GM12878 (cell line): ENCODE measurements at regions of chr10 and their contacts with region 1.

Region 1: GRCh38 chr10:88091490-88092105 is 228.2 kb downstream of the PTEN start:
- DNase-seq: peak; percentile 98
- ATAC-seq: peak; percentile 88
- H3K4me3 ChIP-seq: 0 out of 2 replicates have a peak overlapping the region, but pooled peaks have one; percentile 20
- H3K27ac ChIP-seq: peak overlapping the region; percentile 97
- H3K4me1 ChIP-seq: peaks cover 31% of the 10 kb centered on the region
- H3K27me3 ChIP-seq: no peaks in the 10 kb centered on the region
- CTCF ChIP-seq: peak in 1 of 3 experiments; percentile 23; a peak in 1 of 6 replicates
- EP300 ChIP-seq: peak; percentile 92 to 94
- POLR2A ChIP-seq: no peak
- RAD21 ChIP-seq: peak; percentile 51

Region 2: GRCh38 chr10:87882555-87883294 is 208.9 kb before region 1 on chr10:
- CTCF ChIA-PET with region 1: no interaction called
- POLR2A ChIA-PET with region 1: no interaction called
- RAD21 ChIA-PET with region 1: no interaction called
- SMC1A ChIA-PET with region 1: no interaction called
- in situ Hi-C with region 1: no loop called
- intact Hi-C with region 1: no loop called
- DNase-seq: no peak
- ATAC-seq: peak; percentile 53
- H3K4me3 ChIP-seq: no peak overlapping the region
- H3K27ac ChIP-seq: no peak overlapping the region
- H3K4me1 ChIP-seq: no peaks in the 10 kb centered on the region
- H3K27me3 ChIP-seq: no peaks in the 10 kb centered on the region
- CTCF ChIP-seq: no peak
- EP300 ChIP-seq: no peak
- POLR2A ChIP-seq: no peak
- RAD21 ChIP-seq: no peak

Region 3: DNA sequence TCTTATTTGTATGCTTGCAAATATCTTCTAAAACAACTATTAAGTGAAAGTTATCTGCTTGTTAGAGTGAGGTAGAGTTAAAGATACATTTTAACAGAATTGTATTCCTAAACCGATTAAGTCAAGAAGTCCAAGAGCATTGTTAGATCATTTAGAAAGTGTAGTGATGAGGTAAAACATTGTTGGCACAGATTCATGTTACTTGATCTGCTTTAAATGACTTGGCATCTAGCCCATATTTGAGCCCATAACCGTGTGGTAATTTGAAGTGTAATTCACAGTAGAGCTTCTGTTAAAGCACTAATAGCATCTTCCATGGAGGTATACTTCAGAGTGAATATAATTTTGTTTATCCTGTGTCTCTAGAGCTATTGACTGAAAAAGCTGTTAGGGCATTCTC is 166.0 kb before region 1 on chr10:
- CTCF ChIA-PET with region 1: no interaction called
- POLR2A ChIA-PET with region 1: interaction called, 3 read pairs
- RAD21 ChIA-PET with region 1: interaction called, 10 read pairs
- SMC1A ChIA-PET with region 1: interaction called, 3 read pairs
- in situ Hi-C with region 1: no loop called
- intact Hi-C with region 1: no loop called
- DNase-seq: no peak
- ATAC-seq: no peak
- H3K4me3 ChIP-seq: no peak overlapping the region
- H3K27ac ChIP-seq: no peak overlapping the region
- H3K4me1 ChIP-seq: peaks cover 26% of the 10 kb centered on the region
- H3K27me3 ChIP-seq: no peaks in the 10 kb centered on the region
- CTCF ChIP-seq: no peak
- EP300 ChIP-seq: no peak
- POLR2A ChIP-seq: no peak
- RAD21 ChIP-seq: no peak

Region 4: DNA sequence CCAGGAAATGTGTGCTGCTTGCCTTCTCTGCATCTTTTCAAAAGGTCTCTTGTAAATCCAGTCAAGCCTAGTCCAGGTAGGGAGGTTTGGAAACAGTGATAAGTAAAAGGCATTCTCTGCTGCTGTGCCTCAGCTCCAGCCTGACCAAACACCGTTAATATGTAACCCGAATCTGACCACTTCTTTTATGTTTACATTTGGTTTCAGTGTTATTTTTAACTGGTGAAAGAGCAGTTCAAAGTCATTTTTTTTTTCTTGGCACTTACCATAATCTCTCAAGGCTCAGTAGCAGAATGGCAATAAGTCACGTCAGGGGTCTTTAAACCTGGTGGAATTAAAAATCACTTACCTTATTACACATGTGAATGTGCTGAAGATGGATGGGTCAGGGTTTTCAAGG is 11.4 kb before region 1 on chr10:
- CTCF ChIA-PET with region 1: interaction called, 24 read pairs
- POLR2A ChIA-PET with region 1: interaction called, 12 read pairs
- RAD21 ChIA-PET with region 1: interaction called, 73 read pairs
- SMC1A ChIA-PET with region 1: interaction called, 83 read pairs
- in situ Hi-C with region 1: no loop called
- intact Hi-C with region 1: no loop called
- DNase-seq: no peak
- ATAC-seq: peak; percentile 75
- H3K4me3 ChIP-seq: peak overlapping the region; percentile 30
- H3K27ac ChIP-seq: peak overlapping the region; percentile 60
- H3K4me1 ChIP-seq: peaks cover 52% of the 10 kb centered on the region
- H3K27me3 ChIP-seq: no peaks in the 10 kb centered on the region
- CTCF ChIP-seq: no peak
- EP300 ChIP-seq: peak; percentile 75 to 82; a peak in 3 of 4 replicates
- POLR2A ChIP-seq: no peak
- RAD21 ChIP-seq: 0 out of 2 replicates have a peak, but pooled peaks have one; percentile 15

Region 5: DNA sequence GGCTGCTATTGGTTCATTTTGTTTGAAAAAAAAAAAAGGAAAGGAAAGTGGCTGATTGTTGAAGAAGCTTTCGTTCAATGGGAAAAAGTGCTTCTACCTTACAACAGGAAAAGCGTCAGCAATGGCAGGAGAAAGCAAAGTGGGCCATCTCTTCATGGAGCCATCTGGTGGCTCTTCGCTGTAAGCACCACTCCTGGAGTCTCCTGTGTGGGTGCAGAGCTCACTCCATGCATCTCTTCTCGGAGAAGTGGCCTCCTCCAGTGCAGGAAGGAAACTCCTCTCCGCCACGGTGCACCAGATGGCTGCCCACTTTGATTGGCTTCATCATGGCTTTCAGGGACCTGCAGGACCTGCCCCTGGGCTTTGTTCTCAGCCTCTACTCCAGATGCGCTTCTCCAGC is 22.8 kb after region 1 on chr10:
- CTCF ChIA-PET with region 1: interaction called, 33 read pairs
- POLR2A ChIA-PET with region 1: interaction called, 4 read pairs
- RAD21 ChIA-PET with region 1: interaction called, 65 read pairs
- SMC1A ChIA-PET with region 1: interaction called, 210 read pairs
- in situ Hi-C with region 1: no loop called
- intact Hi-C with region 1: loop called (anchors 1 kb)
- DNase-seq: no peak
- ATAC-seq: peak; percentile 61
- H3K4me3 ChIP-seq: no peak overlapping the region
- H3K27ac ChIP-seq: peak overlapping the region; percentile 86
- H3K4me1 ChIP-seq: peaks cover 87% of the 10 kb centered on the region
- H3K27me3 ChIP-seq: no peaks in the 10 kb centered on the region
- CTCF ChIP-seq: peak; percentile 69 to 73 (median 72)
- EP300 ChIP-seq: no peak
- POLR2A ChIP-seq: no peak
- RAD21 ChIP-seq: peak; percentile 86

Region 6: DNA sequence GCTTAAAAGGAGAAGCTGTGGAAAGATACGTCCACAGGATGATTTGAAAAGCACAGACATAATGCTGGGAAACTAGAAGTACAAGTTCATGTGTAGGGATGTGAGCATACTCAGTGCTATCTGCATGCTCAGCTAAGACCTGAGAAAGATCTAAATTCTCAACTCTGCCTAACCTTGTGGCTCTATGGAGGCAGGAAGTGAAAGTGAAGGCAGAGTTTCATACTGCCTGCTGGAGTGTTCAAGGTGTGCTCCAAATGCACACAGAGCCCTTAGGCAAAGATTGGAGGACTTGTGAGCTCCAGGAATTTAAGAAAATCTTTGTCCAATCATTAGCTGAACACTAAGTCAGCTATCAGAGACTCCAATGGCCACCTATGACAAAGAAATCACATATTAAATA is 300.6 kb after region 1 on chr10:
- CTCF ChIA-PET with region 1: interaction called, 41 read pairs
- POLR2A ChIA-PET with region 1: no interaction called
- RAD21 ChIA-PET with region 1: interaction called, 46 read pairs
- SMC1A ChIA-PET with region 1: interaction called, 56 read pairs
- in situ Hi-C with region 1: no loop called
- intact Hi-C with region 1: no loop called
- DNase-seq: peak; percentile 80
- ATAC-seq: peak; percentile 95
- H3K4me3 ChIP-seq: peak overlapping the region; percentile 28; the same call in 1 of the 2 replicates
- H3K27ac ChIP-seq: peak overlapping the region; percentile 82
- H3K4me1 ChIP-seq: peaks cover 46% of the 10 kb centered on the region
- H3K27me3 ChIP-seq: no peaks in the 10 kb centered on the region
- CTCF ChIP-seq: no peak
- EP300 ChIP-seq: no peak
- POLR2A ChIP-seq: 0 out of 2 replicates have a peak, but pooled peaks have one; percentile 30
- RAD21 ChIP-seq: peak; percentile 26